ENCODE measurements at regions of chr18 and their contacts with region 1.

Region 1: DNA sequence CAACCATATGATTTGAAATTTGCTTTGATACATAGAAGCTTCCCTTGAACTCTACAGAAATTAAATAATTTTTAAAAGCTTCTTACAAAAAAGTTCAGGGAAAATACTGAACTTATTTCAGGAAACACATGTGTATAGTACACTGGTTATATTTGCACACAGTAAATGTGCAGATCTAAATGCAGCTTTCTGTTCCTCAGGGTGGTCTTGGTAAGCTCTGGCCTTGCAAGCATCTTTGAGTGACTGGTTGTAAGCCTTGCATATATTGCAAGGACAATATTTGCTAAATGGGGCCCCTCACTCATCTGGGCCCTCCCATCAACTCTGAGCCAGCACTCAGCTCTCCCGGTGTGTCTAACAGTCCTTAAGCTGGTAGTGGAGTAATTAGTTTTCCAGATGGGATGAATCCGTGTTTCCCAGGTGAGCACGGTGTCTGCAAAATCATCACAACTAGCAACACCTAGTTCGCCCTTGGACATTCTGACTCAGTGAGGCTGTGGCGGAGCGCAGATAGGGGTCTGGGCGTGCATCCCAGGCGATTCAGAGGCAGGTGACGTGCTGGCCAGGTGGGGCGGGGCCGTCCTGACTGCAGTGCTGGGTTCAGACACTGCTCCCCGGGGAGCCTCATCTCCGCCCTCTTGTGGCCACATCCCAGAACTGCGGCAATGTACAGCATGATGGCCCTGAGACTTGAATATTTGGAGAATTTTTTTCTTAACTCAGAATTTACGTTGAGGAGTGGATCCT is 149.6 kb downstream of the MBP start:
- DNase-seq: peak; percentile 80
- H3K4me3 ChIP-seq: no peak overlapping the region
- H3K27ac ChIP-seq: no peak overlapping the region
- H3K4me1 ChIP-seq: no peaks in the 10 kb centered on the region
- H3K27me3 ChIP-seq: no peaks in the 10 kb centered on the region
- CTCF ChIP-seq: peak; percentile 72 to 89 (median 83)
- POLR2A ChIP-seq: no peak

Region 2: GRCh38 chr18:76803814-76804213 is 179.2 kb before region 1 on chr18:
- intact Hi-C with region 1: loop called (anchors 10 kb)
- DNase-seq: peak; percentile 59 to 61
- H3K4me3 ChIP-seq: no peak overlapping the region
- H3K27ac ChIP-seq: no peak overlapping the region
- H3K4me1 ChIP-seq: no peaks in the 10 kb centered on the region
- H3K27me3 ChIP-seq: no peaks in the 10 kb centered on the region
- CTCF ChIP-seq: peak; percentile 61 to 81 (median 66)
- POLR2A ChIP-seq: no peak

Region 3: DNA sequence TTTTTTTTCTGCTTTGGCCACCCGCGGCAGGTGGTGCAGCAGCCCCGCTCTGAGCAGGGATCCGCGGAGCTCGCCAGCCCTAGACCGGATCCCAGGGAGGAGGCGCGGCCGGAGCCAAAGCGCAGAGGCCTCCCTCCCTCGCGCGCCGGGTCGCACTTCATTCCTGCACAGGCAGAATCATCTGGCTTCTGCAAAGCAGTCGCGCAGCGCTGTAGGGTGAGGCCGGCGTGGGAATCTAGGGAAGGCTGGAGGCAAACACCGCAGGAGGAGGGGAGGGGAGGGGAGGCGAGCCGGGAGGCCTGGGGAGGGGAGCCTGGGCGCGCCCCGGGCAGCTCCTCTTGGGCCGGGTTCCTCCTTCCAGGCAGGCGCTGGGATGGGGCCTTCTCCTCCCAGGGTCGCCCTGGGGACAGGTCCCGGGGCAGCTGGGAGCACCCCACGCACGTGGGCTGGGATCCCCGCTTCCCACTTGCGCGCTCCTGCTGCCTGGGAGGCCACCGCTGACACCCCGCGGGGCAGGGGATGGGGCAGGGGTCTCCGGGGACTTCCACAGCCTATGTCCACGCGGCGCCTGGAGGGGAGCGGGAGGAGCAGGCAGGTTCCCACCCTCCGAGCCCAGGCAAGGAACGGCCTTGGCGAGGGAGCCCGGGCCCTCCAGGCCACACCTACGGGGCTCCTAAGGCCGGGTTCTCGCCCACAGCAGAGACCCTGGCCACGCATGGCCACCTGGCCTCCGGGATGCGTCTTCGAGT is 104.6 kb after region 1 on chr18:
- intact Hi-C with region 1: no loop called
- DNase-seq: peak; percentile 65 to 66
- H3K4me3 ChIP-seq: peak overlapping the region; percentile 30 to 37
- H3K27ac ChIP-seq: peak overlapping the region; percentile 69 to 83
- H3K4me1 ChIP-seq: peaks cover 0 to 4% of the 10 kb centered on the region in 2 donors
- H3K27me3 ChIP-seq: no peaks in the 10 kb centered on the region
- CTCF ChIP-seq: no peak
- POLR2A ChIP-seq: no peak